Right cardiac atrium (tissue), 5 donors: ENCODE measurements at regions of chr7 and their contacts with region 1.

Region 1: GRCh38 chr7:81244224-81244623 is 325.4 kb upstream of the SEMA3C start:
- DNase-seq: no peak
- ATAC-seq: no peak
- H3K4me3 ChIP-seq: no peak overlapping the region
- H3K27ac ChIP-seq: no peak overlapping the region
- H3K4me1 ChIP-seq: no peaks in the 10 kb centered on the region
- H3K27me3 ChIP-seq: no peaks in the 10 kb centered on the region

Region 2: GRCh38 chr7:80821771-80822319 is 422.4 kb before region 1 on chr7:
- intact Hi-C with region 1: no loop called
- DNase-seq: no peak
- ATAC-seq: no peak
- H3K4me3 ChIP-seq: no peak overlapping the region
- H3K27ac ChIP-seq: no peak overlapping the region
- H3K4me1 ChIP-seq: no peaks in the 10 kb centered on the region
- H3K27me3 ChIP-seq: no peaks in the 10 kb centered on the region

Region 3: DNA sequence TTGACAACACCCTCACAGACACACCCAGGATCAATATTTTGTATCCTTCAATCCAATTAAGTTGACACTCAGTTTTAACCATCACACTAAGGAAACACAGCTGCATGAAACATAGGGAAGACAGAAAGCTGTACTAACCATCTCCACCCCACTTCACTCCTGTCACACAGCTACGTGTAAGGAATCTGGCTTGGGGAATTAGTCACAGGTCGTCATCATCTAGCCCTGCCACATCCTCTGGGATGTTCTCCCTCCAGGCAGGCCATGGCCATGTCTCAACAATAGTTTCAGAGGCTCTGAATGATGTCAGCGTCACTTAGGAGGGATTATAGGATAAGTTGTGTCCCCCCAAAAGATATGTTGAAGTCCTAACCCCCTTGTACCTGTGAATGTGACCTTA is 314.6 kb before region 1 on chr7:
- intact Hi-C with region 1: loop called in 1 of 4 experiments (anchors 5 kb)
- DNase-seq: no peak
- ATAC-seq: no peak
- H3K4me3 ChIP-seq: no peak overlapping the region
- H3K27ac ChIP-seq: no peak overlapping the region
- H3K4me1 ChIP-seq: no peaks in the 10 kb centered on the region
- H3K27me3 ChIP-seq: no peaks in the 10 kb centered on the region